ENCODE measurements at regions of chr16 and their contacts with region 1.

Region 1: GRCh38 chr16:58409316-58409973 is 17.2 kb downstream of the GINS3 start:
- DNase-seq: no peak
- ATAC-seq: no peak
- H3K4me3 ChIP-seq: no peak overlapping the region
- H3K4me3 Mint-ChIP-seq: no peak overlapping the region
- H3K27ac ChIP-seq: no peak overlapping the region
- H3K27ac Mint-ChIP-seq: no peak overlapping the region
- H3K4me1 ChIP-seq: no peaks in the 10 kb centered on the region
- H3K4me1 Mint-ChIP-seq: no peaks in the 10 kb centered on the region
- H3K27me3 ChIP-seq: no peaks in the 10 kb centered on the region
- H3K27me3 Mint-ChIP-seq: no peaks in the 10 kb centered on the region

Region 2: DNA sequence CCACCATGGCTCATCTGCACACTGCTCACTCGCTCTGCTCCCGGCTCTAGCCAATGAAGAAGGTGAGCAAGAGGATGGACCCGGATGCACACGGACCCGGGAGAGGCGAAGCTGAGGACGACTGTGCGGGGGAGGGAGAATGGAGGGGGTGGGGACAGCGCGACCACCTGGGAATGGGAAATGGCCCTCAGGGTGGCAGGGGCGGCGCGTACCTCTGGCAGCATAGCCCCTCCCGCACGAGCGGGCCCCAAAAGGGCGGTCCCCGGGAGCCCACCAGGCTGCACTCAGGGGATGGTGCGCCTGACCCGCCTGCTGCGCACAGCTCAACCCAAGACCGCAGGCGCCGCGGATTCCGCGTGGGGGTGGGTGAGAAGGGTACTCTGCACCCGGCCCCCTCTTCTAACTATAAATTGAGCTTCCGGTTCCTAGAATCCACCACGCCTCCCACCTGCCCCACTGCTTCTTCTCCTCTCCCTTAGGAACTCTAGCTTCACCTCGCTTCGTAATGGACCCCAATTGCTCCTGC is 1733.7 kb before region 1 on chr16:
- CTCF ChIA-PET with region 1: no interaction called
- POLR2A ChIA-PET with region 1: interaction called in 1 of 2 experiments, 10 read pairs
- DNase-seq: peak in 31 of 35 experiments; percentile 18 to 67 (median 46)
- ATAC-seq: peak; percentile 62 to 91 (median 84)
- H3K4me3 ChIP-seq: peak overlapping the region; percentile 44 to 52
- H3K4me3 Mint-ChIP-seq: peak overlapping the region; percentile 61 to 85 (median 66)
- H3K27ac ChIP-seq: no peak overlapping the region
- H3K27ac Mint-ChIP-seq: peak overlapping the region in 1 of 2 donors; percentile 78
- H3K4me1 ChIP-seq: peaks cover 3 to 13% of the 10 kb centered on the region in 2 experiments
- H3K4me1 Mint-ChIP-seq: peaks cover 10 to 20% (median 16%) of the 10 kb centered on the region in 3 donors
- H3K27me3 ChIP-seq: peaks cover 8 to 25% of the 10 kb centered on the region in 2 experiments
- H3K27me3 Mint-ChIP-seq: peaks cover 12 to 38% of the 10 kb centered on the region in 2 donors